ENCODE measurements at regions of chr21 and their contacts with region 1.

Region 1: DNA sequence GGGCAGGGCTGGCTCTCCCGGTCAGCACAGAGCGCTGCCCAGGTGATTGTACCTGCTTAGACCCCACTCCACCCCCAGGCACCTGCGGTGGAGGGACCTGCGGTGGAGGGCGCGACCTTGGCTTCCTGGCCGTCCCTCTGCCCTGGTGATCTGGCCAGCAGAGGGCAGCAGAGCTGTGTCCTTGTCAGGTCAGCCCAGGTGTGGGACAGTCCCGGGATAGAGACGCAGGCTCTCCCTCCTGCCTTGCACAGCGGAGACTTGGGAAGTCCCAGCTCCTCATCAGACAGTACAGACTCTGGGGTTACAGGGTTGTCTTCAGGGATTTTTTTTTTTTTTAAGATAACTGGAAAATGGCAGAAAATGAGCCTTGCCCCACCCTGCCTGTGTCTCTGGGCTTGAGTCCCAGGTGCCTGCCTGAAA is 10.0 kb downstream of the SLX9 start:
- DNase-seq: peak; percentile 54 to 78 (median 67)
- H3K4me3 ChIP-seq: no peak overlapping the region
- H3K4me3 Mint-ChIP-seq: no peak overlapping the region
- H3K27ac ChIP-seq: no peak overlapping the region
- H3K27ac Mint-ChIP-seq: no peak overlapping the region
- H3K4me1 ChIP-seq: no peaks in the 10 kb centered on the region
- H3K4me1 Mint-ChIP-seq: no peaks in the 10 kb centered on the region
- H3K27me3 ChIP-seq: no peaks in the 10 kb centered on the region
- H3K27me3 Mint-ChIP-seq: peaks cover 0 to 2% (median 2%) of the 10 kb centered on the region in 3 donors
- CTCF ChIP-seq: peak; percentile 92

Region 2: GRCh38 chr21:44994695-44995342 is 45.0 kb after region 1 on chr21:
- intact Hi-C with region 1: loop called in 1 of 2 experiments (anchors 5 kb)
- DNase-seq: no peak
- H3K4me3 ChIP-seq: no peak overlapping the region
- H3K4me3 Mint-ChIP-seq: no peak overlapping the region
- H3K27ac ChIP-seq: no peak overlapping the region
- H3K27ac Mint-ChIP-seq: no peak overlapping the region
- H3K4me1 ChIP-seq: no peaks in the 10 kb centered on the region
- H3K4me1 Mint-ChIP-seq: no peaks in the 10 kb centered on the region
- H3K27me3 ChIP-seq: no peaks in the 10 kb centered on the region
- H3K27me3 Mint-ChIP-seq: peaks cover 1 to 6% (median 5%) of the 10 kb centered on the region in 3 donors
- CTCF ChIP-seq: no peak

Region 3: DNA sequence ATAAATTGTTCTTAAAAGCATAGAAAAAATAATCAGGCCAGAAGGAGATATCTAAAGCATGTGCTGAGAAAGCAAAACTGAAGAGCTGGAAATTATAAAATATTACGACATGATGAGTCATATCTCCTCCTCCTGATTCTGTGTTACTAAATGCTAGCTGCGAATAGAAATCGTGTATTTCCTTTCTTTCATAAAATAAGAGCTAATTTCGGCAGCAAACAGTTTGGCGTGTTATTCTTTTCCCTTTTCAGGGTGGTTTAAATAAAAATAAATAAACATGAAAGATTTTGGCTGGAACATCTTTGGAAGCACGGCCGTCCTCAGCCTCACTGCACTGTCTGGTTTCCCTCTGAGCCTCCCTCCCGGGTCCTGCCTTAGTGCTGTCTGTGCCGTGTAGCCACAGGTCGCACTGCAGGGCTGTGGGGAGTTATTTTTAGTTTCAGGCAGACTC is 180.6 kb after region 1 on chr21:
- intact Hi-C with region 1: loop called (anchors 2 kb)
- DNase-seq: peak; percentile 48 to 82 (median 70)
- H3K4me3 ChIP-seq: peak overlapping the region; percentile 28 to 63 (median 31)
- H3K4me3 Mint-ChIP-seq: peak overlapping the region; percentile 66 to 79
- H3K27ac ChIP-seq: peak overlapping the region; percentile 50 to 68
- H3K27ac Mint-ChIP-seq: peak overlapping the region; percentile 48 to 91 (median 88)
- H3K4me1 ChIP-seq: peaks cover 36 to 46% of the 10 kb centered on the region in 2 donors
- H3K4me1 Mint-ChIP-seq: peaks cover 46% of the 10 kb centered on the region
- H3K27me3 ChIP-seq: no peaks in the 10 kb centered on the region
- H3K27me3 Mint-ChIP-seq: peaks cover 1 to 14% (median 3%) of the 10 kb centered on the region in 3 donors
- CTCF ChIP-seq: no peak

Region 4: GRCh38 chr21:45140346-45140940 is 190.7 kb after region 1 on chr21:
- intact Hi-C with region 1: loop called (anchors 2 kb)
- DNase-seq: peak; percentile 74 to 81 (median 77)
- H3K4me3 ChIP-seq: no peak overlapping the region
- H3K4me3 Mint-ChIP-seq: no peak overlapping the region
- H3K27ac ChIP-seq: no peak overlapping the region
- H3K27ac Mint-ChIP-seq: peak overlapping the region in 2 of 7 donors; percentile 26 to 65
- H3K4me1 ChIP-seq: peaks cover 0 to 4% of the 10 kb centered on the region in 2 donors
- H3K4me1 Mint-ChIP-seq: peaks cover 6% of the 10 kb centered on the region
- H3K27me3 ChIP-seq: no peaks in the 10 kb centered on the region
- H3K27me3 Mint-ChIP-seq: peaks cover 0 to 2% (median 1%) of the 10 kb centered on the region in 3 donors
- CTCF ChIP-seq: peak; percentile 87